BJ (cell line): ENCODE measurements at regions of chr18 and their contacts with region 1.

Region 1: GRCh38 chr18:24138789-24139616 is at the start of gene CABYR:
- DNase-seq: peak; percentile 59
- H3K4me3 ChIP-seq: peak within 1 kb of the TSS; percentile 64
- H3K27me3 ChIP-seq: no peaks in the 10 kb centered on the region
- CTCF ChIP-seq: no peak
- polyA plus RNA-seq, gene CABYR: 11.7 and 12.9 TPM in 2 replicates

Region 2: DNA sequence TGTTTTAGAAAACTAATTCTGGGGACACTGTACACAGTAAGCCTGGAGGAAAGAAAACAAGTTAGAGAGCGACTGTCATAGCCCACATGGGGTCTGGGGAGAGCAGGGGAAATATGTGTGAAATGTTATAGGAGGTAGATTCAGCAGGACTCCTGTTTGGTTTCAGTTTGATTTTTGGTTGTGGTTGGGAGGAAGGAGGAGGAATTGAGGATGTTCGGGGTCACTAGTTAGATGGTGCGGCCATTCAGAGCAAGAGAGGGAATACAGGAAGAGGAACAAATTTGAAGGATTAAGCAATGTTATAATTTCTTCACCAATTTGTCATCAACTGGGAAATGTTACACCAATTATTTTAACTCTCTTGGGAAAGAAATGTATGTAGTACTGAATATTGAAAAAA is 99.3 kb before region 1 on chr18:
- CTCF ChIA-PET with region 1: no interaction called
- POLR2A ChIA-PET with region 1: no interaction called
- DNase-seq: no peak
- H3K4me3 ChIP-seq: no peak overlapping the region
- H3K27me3 ChIP-seq: no peaks in the 10 kb centered on the region
- CTCF ChIP-seq: no peak

Region 3: DNA sequence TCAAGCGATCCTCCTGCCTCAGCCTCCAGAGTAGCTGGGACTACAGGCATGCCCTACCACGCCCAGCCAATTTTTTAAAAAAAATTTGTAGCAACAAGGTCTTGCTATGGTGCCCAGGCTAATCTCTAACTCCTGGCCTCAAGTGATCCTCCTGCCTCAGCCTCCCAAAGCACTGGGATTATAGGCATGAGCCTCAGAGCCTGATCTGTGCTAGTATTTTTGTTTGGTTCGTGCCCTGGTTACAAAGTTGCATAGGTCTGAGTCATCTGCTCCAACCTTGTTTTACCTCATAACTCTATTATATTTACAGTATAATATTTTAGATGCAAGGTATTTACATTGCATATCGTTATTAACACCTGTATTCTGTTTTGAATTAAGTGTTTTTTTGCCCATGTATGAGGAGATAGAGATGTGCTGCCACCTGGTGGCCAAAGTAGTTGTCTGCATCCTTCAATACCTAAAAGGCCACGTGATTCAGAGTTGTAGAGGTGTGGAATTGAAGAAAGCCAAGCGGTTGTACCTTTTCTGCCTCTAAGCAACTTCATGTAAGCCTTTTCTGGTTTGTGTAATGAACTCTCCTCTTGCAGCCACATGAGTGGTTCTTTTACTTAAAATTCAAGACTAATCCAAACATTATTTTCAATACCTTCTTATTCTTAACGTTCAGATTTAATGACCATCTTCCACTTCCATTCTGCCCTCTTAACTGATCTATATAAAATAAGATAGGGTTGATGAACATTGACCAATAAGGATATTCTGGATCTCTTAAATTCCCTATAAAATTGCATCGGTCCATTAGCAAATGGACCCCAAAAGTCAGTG is 20.0 kb before region 1 on chr18:
- CTCF ChIA-PET with region 1: no interaction called
- POLR2A ChIA-PET with region 1: interaction called, 13 read pairs
- DNase-seq: no peak
- H3K4me3 ChIP-seq: no peak overlapping the region
- H3K27me3 ChIP-seq: no peaks in the 10 kb centered on the region
- CTCF ChIP-seq: peak; percentile 74

Region 4: GRCh38 chr18:24189007-24189528 is 50.1 kb after region 1 on chr18:
- CTCF ChIA-PET with region 1: no interaction called
- POLR2A ChIA-PET with region 1: no interaction called
- DNase-seq: no peak
- H3K4me3 ChIP-seq: no peak overlapping the region
- H3K27me3 ChIP-seq: no peaks in the 10 kb centered on the region
- CTCF ChIP-seq: no peak